ENCODE measurements at regions of chr6 and their contacts with region 1.

Region 1: GRCh38 chr6:139369568-139370282 is 4.7 kb downstream of the CITED2 start:
- DNase-seq: peak; percentile 25
- H3K4me3 ChIP-seq: no peak overlapping the region
- H3K27ac ChIP-seq: no peak overlapping the region
- H3K4me1 ChIP-seq: peaks cover 13% of the 10 kb centered on the region
- H3K27me3 ChIP-seq: no peaks in the 10 kb centered on the region
- CTCF ChIP-seq: peak; percentile 60 to 63

Region 2: DNA sequence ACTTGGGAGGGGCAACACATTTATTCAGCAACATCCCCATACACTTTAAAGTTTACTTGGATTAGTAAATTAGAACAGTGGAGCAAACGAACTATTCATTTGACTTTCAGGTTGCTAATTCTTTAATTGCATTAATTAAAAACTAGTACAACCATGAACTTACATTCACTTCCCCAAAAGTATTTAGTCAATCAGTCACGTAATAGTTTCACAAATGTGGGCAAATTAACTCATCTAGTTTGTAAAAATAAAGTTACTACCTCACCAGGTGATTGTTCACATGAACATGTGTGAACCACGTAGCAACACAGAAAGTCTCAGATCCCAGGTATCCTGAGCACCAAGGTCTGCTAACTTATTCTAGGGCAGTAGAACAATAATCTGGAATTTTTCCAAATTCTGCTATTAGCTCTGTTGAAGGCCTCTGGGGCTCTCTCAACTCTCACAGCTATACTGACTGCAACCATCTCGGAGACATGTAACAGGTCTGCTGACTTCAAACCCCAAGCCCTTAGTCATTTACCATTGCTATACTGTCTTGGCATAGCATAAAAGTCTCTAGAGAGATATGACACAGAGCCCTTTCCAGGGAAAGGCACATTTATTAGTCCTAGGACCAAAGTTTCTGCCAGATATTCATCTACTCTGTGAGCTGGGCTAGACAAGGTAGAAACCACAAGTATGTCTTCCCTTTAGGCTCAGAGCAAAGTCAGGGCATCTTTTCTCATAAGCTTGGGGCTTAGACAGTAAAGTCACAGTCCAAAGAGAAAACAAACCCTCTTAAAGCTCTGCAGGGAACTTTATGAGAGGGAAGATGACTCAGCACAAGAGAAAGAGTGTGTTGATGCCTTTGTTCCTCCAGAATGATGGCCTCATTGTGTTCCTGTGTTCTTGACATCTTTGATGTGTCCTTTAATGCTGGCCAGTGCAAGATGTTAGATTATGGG is 647.0 kb before region 1 on chr6:
- CTCF ChIA-PET with region 1: no interaction called
- dilution Hi-C with region 1: no loop called
- in situ Hi-C with region 1: no loop called
- intact Hi-C with region 1: no loop called
- DNase-seq: peak; percentile 87
- H3K4me3 ChIP-seq: no peak overlapping the region
- H3K27ac ChIP-seq: peak overlapping the region; percentile 0
- H3K4me1 ChIP-seq: peaks cover 10% of the 10 kb centered on the region
- H3K27me3 ChIP-seq: no peaks in the 10 kb centered on the region
- CTCF ChIP-seq: no peak

Region 3: GRCh38 chr6:140441256-140441655 is 1071.5 kb after region 1 on chr6:
- CTCF ChIA-PET with region 1: interaction called, 8 read pairs
- dilution Hi-C with region 1: no loop called
- in situ Hi-C with region 1: loop called (anchors 10 to 25 kb)
- intact Hi-C with region 1: loop called (anchors 1 kb)
- DNase-seq: peak; percentile 28
- H3K4me3 ChIP-seq: no peak overlapping the region
- H3K27ac ChIP-seq: no peak overlapping the region
- H3K4me1 ChIP-seq: peaks cover 18% of the 10 kb centered on the region
- H3K27me3 ChIP-seq: no peaks in the 10 kb centered on the region
- CTCF ChIP-seq: peak; percentile 43 to 78

Region 4: DNA sequence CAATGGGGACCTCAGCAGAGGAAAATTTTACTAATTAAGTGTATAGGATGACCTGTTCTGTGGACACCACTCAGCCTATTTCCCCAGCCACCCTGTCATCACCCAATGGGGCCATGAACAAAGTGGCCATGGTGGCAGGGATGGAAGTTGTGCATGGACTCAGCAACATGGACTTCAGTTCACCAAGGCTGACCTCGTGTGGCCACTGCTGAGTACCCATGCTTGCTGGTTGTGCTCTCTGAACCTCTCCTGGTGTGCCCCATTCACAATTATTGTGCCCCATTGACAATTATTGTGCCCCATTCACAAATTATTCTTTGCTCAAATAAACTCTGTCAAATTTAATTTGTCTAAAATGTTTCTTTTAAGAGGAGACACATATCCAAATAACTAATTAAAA is 1280.4 kb after region 1 on chr6:
- CTCF ChIA-PET with region 1: no interaction called
- dilution Hi-C with region 1: no loop called
- in situ Hi-C with region 1: no loop called
- intact Hi-C with region 1: loop called (anchors 2 kb)
- DNase-seq: no peak
- H3K4me3 ChIP-seq: no peak overlapping the region
- H3K27ac ChIP-seq: no peak overlapping the region
- H3K4me1 ChIP-seq: no peaks in the 10 kb centered on the region
- H3K27me3 ChIP-seq: no peaks in the 10 kb centered on the region
- CTCF ChIP-seq: peak in 1 of 2 donors; percentile 43

Measured in mammary epithelial cell (primary cell).